ENCODE measurements at regions of chr19 and their contacts with region 1.

Region 1: DNA sequence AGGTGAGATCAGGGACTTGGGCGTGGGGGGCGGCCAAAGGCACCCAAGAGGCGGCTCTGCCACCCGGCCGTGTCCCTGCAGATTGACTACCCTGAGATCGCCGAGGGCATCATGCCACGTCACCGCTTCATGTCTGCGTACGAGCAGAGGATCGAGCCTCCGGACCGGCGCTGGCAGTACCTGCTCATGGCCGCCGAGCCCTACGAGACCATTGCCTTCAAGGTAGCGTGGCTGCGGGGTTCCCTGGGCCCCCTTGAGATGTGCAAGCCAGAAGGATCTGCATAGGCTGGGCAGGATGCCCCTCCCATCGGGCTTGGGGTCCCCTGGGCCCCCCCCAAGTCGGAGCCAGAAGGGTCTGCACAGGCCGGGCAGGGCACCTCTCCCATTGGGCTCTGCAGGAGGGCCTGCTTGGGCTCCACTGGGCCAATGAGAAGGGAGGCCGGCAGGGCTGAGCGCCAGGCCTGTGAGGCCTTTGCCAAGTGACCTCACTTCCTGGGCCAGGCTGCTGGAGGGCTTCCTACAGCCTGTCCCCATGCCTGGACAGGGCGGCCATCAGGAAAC is 2.2 kb upstream of the AMH start:
- DNase-seq: no peak
- H3K4me3 ChIP-seq: no peak overlapping the region
- H3K27ac ChIP-seq: no peak overlapping the region
- H3K4me1 ChIP-seq: peaks cover 2% of the 10 kb centered on the region
- H3K27me3 ChIP-seq: peaks cover 5% of the 10 kb centered on the region
- CTCF ChIP-seq: no peak

Region 2: DNA sequence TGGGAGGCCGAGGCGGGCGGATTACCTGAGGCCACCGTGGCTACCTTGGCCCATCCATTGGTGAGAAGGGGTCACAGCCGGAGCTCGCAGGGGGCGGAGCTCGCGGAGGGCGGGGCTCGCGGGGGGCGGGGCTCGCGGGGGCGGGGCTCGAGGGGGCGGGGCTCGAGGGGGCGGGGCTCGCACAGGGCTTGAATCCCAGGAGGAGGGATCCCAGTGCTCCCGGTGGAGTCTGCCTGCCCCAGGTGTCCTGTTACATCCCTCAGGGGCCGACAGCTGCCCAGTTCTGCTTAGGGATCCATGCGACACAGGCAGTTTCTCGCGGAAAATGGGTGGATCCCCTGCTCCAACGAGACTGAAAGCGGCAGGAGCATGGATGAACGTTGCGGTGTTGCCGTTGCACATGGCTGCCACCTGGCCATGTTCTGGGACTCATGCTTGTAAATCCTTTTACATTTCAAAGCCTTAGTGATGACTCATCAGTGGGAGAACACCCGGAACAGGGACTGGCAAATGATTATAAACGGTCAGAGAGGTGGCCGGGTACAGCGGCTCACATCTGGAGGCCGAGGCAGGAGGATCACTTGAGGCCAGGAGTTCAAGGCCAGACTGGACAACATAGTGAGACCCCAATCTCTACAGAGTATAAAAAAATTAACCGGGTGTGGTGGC is 138.3 kb after region 1 on chr19:
- CTCF ChIA-PET with region 1: no interaction called
- dilution Hi-C with region 1: no loop called
- in situ Hi-C with region 1: no loop called
- intact Hi-C with region 1: no loop called
- DNase-seq: peak; percentile 89
- H3K4me3 ChIP-seq: peak overlapping the region in 1 of 3 experiments; percentile 40
- H3K27ac ChIP-seq: no peak overlapping the region
- H3K4me1 ChIP-seq: peaks cover 7% of the 10 kb centered on the region
- H3K27me3 ChIP-seq: no peaks in the 10 kb centered on the region
- CTCF ChIP-seq: peak in 1 of 2 donors; percentile 27

Region 3: GRCh38 chr19:2750808-2751443 is 504.0 kb after region 1 on chr19:
- CTCF ChIA-PET with region 1: no interaction called
- dilution Hi-C with region 1: loop called (anchors 5 kb)
- in situ Hi-C with region 1: no loop called
- intact Hi-C with region 1: no loop called
- DNase-seq: no peak
- H3K4me3 ChIP-seq: no peak overlapping the region
- H3K27ac ChIP-seq: no peak overlapping the region
- H3K4me1 ChIP-seq: peaks cover 5% of the 10 kb centered on the region
- H3K27me3 ChIP-seq: no peaks in the 10 kb centered on the region
- CTCF ChIP-seq: no peak